HCT116 (cell line): ENCODE measurements at regions of chr12 and their contacts with region 1.

Region 1: GRCh38 chr12:25531502-25532052 is 21.5 kb downstream of the LMNTD1 start:
- DNase-seq: no peak
- ATAC-seq: no peak
- H3K4me3 ChIP-seq: no peak overlapping the region
- H3K27ac ChIP-seq: no peak overlapping the region
- H3K4me1 ChIP-seq: no peaks in the 10 kb centered on the region
- H3K27me3 ChIP-seq: no peaks in the 10 kb centered on the region
- CTCF ChIP-seq: no peak
- POLR2A ChIP-seq: no peak
- RAD21 ChIP-seq: no peak

Region 2: DNA sequence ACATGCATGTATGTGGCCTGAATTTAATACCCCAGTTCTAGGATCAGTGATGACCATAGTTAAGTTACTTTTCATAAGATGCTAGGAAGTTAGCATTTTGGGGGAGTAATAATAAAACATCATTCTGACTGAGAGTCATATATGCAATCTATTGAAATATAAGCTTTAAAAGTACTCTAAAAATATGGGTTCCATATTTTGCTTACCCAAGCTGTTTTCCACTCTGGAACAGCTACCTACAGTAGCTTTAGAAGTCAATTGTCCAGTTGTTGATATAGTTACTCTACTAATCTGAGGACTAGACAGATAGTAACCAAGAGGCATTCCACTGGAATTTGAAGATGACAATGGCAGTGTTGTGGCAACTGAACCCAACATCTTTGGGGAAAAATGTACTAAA is 17.5 kb after region 1 on chr12:
- CTCF ChIA-PET with region 1: no interaction called
- POLR2A ChIA-PET with region 1: no interaction called
- RAD21 ChIA-PET with region 1: no interaction called
- intact Hi-C with region 1: loop called (anchors 1 kb)
- DNase-seq: no peak
- ATAC-seq: no peak
- H3K4me3 ChIP-seq: no peak overlapping the region
- H3K27ac ChIP-seq: no peak overlapping the region
- H3K4me1 ChIP-seq: no peaks in the 10 kb centered on the region
- H3K27me3 ChIP-seq: no peaks in the 10 kb centered on the region
- CTCF ChIP-seq: no peak
- POLR2A ChIP-seq: no peak
- RAD21 ChIP-seq: no peak

Region 3: DNA sequence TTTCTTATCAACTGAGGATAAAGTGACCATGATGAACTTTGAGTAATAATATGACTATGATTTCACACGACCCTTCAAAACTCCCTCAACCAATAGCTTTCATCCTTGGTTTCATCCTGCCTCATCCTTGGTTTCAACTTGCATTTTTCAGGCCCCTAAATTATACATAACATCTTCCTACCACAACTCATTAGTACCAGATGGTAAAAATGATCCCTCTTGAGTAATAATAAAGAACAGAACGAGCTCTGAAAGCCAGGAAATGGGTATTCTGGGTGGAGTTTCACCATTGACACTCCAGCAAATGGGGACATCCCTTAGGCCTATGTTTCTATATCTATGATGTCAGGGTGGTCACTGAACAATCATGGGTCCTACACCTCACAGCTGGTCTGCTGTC is 93.6 kb after region 1 on chr12:
- CTCF ChIA-PET with region 1: no interaction called
- POLR2A ChIA-PET with region 1: no interaction called
- RAD21 ChIA-PET with region 1: no interaction called
- intact Hi-C with region 1: no loop called
- DNase-seq: no peak
- ATAC-seq: no peak
- H3K4me3 ChIP-seq: no peak overlapping the region
- H3K27ac ChIP-seq: no peak overlapping the region
- H3K4me1 ChIP-seq: no peaks in the 10 kb centered on the region
- H3K27me3 ChIP-seq: no peaks in the 10 kb centered on the region
- CTCF ChIP-seq: no peak
- POLR2A ChIP-seq: no peak
- RAD21 ChIP-seq: no peak